ENCODE measurements at regions of chr11 and their contacts with region 1.

Region 1: GRCh38 chr11:46700241-46701077 is at the starts of genes ARHGAP1 and ZNF408:
- DNase-seq: peak; percentile 99 to 100 (median 99)
- ATAC-seq: peak; percentile 92 to 94 (median 94)
- H3K4me3 ChIP-seq: peak within 1 kb of the TSS; percentile 68 to 100 (median 88)
- H3K27ac ChIP-seq: peak within 1 kb of the TSS; percentile 87 to 100 (median 94)
- H3K4me1 ChIP-seq: peaks cover 4 to 68% (median 57%) of the 10 kb centered on the region in 12 donors
- H3K27me3 ChIP-seq: no peaks in the 10 kb centered on the region
- CTCF ChIP-seq: no peak
- POLR2A ChIP-seq: peak in 1 of 2 donors; percentile 87
- total RNA-seq, gene ARHGAP1: 57.5 to 309 (median 78.9) TPM
- total RNA-seq, gene ZNF408: 5.3 to 10.0 (median 7.1) TPM

Region 2: DNA sequence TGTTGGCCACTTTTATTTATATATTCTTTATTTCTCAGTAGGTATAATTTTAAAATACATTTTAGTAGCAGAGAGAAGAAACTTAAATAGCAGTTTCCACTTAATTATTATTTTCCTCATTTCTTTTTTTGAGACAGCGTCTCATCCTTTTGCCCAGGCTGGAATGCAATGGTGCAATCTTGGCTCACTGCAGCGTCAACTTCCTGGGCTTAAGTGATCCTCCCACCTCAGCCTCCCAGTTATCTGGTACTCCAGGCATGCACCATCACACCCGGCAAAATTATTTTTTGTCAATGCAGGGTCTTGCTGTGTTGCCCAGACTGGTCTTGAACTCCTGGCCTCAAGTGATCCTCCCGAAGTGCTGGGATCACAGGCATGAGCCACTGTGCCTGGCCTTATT is 44.8 kb before region 1 on chr11:
- intact Hi-C with region 1: loop called in 1 of 10 experiments (anchors 2 kb)
- DNase-seq: no peak
- ATAC-seq: no peak
- H3K4me3 ChIP-seq: no peak overlapping the region
- H3K27ac ChIP-seq: no peak overlapping the region
- H3K4me1 ChIP-seq: peaks cover 0 to 30% (median 8%) of the 10 kb centered on the region in 12 donors
- H3K27me3 ChIP-seq: no peaks in the 10 kb centered on the region
- CTCF ChIP-seq: no peak
- POLR2A ChIP-seq: no peak